ENCODE measurements at regions of chr1 and their contacts with region 1.

Region 1: DNA sequence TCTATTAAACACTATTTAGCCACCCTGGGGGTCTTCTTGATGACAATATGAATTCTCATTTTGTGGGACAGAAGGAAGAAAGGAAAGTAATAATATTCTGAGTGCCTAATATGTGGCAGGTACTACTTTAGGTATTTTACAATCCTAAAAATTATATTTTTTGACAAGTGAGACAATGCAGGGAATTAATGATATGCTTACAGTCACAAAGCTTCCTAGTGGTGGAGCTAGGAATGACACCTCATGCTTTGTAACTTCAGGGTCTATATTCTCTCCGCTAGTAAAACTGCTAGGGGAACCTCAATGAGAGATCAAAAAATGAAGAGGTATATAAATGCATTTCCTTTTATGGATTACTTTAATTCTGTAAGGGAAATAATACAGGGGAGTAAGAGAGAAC is 44.3 kb downstream of the TPR start:
- DNase-seq: no peak
- H3K4me3 ChIP-seq: no peak overlapping the region
- H3K27ac ChIP-seq: no peak overlapping the region
- H3K4me1 ChIP-seq: no peaks in the 10 kb centered on the region
- H3K27me3 ChIP-seq: no peaks in the 10 kb centered on the region
- CTCF ChIP-seq: peak in 2 of 3 experiments; percentile 14 to 22

Region 2: GRCh38 chr1:184716158-184716557 is 1614.6 kb before region 1 on chr1:
- intact Hi-C with region 1: loop called (anchors 10 kb)
- DNase-seq: no peak
- H3K4me3 ChIP-seq: no peak overlapping the region
- H3K27ac ChIP-seq: no peak overlapping the region
- H3K4me1 ChIP-seq: no peaks in the 10 kb centered on the region
- H3K27me3 ChIP-seq: no peaks in the 10 kb centered on the region
- CTCF ChIP-seq: no peak

Region 3: DNA sequence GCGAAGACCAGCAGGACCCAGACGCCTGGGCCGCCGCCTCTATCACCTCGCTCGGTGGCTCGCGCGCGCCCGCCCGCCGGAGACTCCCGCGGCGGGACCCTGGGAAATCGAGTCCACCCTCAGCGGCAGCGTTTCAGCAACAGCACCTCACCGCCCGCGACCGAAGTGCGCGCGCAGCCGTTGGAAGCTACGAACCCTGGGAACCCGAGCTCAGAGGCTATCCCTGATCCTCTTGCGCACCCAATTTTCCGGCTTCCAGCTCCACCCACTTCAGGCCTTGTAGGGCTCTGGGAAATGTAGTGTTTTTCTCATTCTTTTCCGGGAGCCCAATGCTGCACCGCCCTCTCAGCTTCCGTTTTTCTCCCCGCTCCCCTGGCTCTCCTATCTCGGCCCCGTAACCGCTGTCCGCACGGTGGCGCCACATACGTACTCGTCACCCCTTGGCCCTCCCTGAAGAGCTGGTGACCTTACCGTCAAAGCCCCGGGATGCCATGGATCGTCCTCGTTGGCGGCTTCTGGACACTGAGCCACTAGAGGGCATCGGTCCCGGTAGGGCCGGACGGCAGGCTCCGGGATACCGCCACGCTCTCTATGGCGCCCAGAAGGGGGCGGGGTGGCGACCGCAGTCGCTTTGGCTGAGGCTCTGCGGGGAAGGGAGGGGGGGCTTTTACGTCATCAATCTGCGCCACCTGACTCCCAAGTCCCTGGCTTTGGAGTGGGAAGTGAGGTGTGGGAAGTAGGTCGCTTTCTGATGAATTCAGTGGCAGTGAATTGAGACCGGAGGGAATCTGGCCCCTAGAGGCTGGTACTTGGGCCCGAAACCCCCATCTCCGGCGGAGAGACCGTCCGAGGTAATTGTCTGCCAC is 44.6 kb after region 1 on chr1 and contains the starts of genes ODR4 and TPR:
- intact Hi-C with region 1: no loop called
- DNase-seq: peak; percentile 94 to 99
- H3K4me3 ChIP-seq: peak within 1 kb of the TSS; percentile 74 to 94
- H3K27ac ChIP-seq: peak within 1 kb of the TSS; percentile 98 to 99
- H3K4me1 ChIP-seq: peaks cover 6 to 16% of the 10 kb centered on the region in 2 donors
- H3K27me3 ChIP-seq: no peaks in the 10 kb centered on the region
- CTCF ChIP-seq: peak; percentile 90 to 92 (median 91)
- total RNA-seq, gene ODR4: 5.5 TPM
- total RNA-seq, gene TPR: 35.7 TPM

Region 4: DNA sequence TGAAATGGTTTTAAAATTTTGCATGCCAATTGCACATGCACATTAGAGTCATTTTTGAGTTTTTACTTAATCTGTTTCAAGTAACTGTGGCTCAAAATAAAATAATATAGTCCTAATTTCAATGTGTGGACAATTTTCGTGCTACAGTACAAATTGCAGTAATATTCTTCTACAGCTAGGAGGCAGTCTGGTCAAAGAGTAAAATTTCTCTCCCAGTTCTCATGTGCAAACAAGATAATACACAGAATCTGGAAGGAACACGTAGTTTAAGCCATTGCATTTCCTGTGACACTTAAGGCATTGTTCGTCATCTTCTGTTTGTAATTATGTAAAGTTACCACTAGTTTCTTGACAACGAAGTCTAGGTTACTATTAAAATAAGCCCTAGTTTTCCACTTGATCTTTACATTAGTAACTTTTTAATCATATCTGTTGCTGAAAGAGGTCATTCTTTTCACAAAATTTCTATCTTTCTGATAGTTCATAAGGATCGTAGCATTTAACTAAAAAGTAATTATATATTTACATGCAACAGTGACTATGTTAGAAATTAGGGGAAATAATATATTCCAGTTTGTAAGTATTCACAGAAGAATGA is 73.8 kb after region 1 on chr1:
- intact Hi-C with region 1: loop called (anchors 10 kb)
- DNase-seq: no peak
- H3K4me3 ChIP-seq: no peak overlapping the region
- H3K27ac ChIP-seq: no peak overlapping the region
- H3K4me1 ChIP-seq: no peaks in the 10 kb centered on the region
- H3K27me3 ChIP-seq: no peaks in the 10 kb centered on the region
- CTCF ChIP-seq: peak; percentile 21 to 62 (median 50)

Measured in ascending aorta (tissue), 2 donors.